ENCODE measurements at regions of chr1 and their contacts with region 1.

Region 1: GRCh38 chr1:35298464-35298863 is 30.0 kb downstream of the ZMYM4 start:
- DNase-seq: peak in 1 of 2 donors; percentile 34
- ATAC-seq: peak; percentile 53 to 83 (median 74)
- H3K4me3 ChIP-seq: no peak overlapping the region
- H3K27ac ChIP-seq: peak overlapping the region in 1 of 10 donors; percentile 17
- H3K4me1 ChIP-seq: peaks cover 0 to 38% (median 16%) of the 10 kb centered on the region in 9 donors
- H3K27me3 ChIP-seq: no peaks in the 10 kb centered on the region
- CTCF ChIP-seq: peak in 7 of 9 donors; percentile 28 to 64 (median 53)

Region 2: GRCh38 chr1:35243691-35244090 is 54.8 kb before region 1 on chr1:
- intact Hi-C with region 1: no loop called
- DNase-seq: no peak
- ATAC-seq: peak in 1 of 8 donors; percentile 23
- H3K4me3 ChIP-seq: no peak overlapping the region
- H3K27ac ChIP-seq: no peak overlapping the region
- H3K4me1 ChIP-seq: no peaks in the 10 kb centered on the region
- H3K27me3 ChIP-seq: peaks cover 0 to 4% (median 0%) of the 10 kb centered on the region in 7 donors
- CTCF ChIP-seq: no peak

Region 3: DNA sequence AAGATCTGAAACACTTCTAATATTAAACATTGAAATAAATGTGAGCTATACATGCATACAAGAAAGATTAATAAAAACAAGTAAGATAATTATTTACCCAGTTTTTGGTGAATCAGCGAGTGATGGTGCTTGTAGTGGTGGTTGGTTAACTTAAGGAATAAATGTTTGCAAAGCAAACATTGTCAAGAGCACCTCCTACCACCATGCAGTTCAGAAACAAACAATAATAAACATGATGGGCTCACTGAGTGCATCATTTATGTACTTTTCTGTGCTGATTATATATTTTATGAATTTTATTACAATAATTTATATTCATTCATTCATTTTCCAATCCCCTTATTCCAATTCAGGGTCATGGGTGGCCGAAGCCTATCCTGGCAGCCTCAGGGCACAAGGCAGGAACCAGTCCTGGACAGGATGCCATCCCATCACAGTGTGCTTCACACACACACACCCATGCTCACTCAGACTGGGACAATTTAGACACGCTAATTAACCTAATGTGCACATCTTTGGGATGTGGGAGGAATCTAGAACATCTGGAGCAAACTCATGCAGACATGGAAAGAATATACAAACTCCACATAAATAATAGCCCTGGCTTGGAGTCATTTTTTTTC is 27.9 kb after region 1 on chr1:
- intact Hi-C with region 1: loop called in 1 of 10 experiments (anchors 5 kb)
- DNase-seq: no peak
- ATAC-seq: no peak
- H3K4me3 ChIP-seq: no peak overlapping the region
- H3K27ac ChIP-seq: no peak overlapping the region
- H3K4me1 ChIP-seq: peaks cover 0 to 34% (median 11%) of the 10 kb centered on the region in 9 donors
- H3K27me3 ChIP-seq: no peaks in the 10 kb centered on the region
- CTCF ChIP-seq: no peak